ENCODE measurements at regions of chr19 and their contacts with region 1.

Region 1: DNA sequence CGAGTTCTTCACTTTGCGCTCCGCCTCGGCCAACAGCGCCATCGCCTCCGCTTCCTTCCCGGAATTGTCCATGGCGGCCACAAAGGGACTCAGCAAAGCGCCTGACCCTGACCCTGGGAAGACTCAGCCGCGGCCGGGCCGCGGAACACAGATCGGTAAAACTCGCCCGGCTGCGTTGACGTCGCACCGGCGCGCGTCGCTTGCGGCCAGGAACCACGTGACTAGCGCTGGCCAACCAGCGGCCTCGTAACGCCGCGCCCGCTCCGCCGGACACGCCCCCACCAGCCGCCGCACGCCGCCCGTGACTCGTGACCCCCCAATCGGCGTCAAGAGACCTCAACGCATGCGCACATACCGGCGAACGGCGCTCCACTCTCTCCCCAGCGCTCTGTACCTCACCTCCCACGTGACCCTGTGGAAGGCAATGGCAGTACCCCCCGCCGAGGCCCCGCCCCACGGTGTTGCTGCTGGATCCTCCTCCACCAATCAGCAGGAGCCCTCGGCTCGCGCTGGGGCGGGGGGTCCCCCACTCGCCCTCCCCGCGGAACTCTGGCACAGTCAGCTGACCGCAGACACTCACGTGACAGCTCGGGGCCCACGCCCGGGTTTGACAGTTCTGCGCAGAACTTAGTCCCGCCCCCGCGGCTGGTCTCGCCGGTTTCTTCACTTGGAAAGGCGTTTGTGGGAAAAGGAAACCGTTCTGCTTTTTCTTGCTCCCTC is at the start of gene NAPA:
- DNase-seq: peak; percentile 100
- total RNA-seq, gene NAPA: 112 TPM

Region 2: GRCh38 chr19:47436712-47437401 is 78.2 kb before region 1 on chr19:
- intact Hi-C with region 1: loop called (anchors 2 kb)
- DNase-seq: peak; percentile 84

Region 3: GRCh38 chr19:47483800-47484690 is 31.0 kb before region 1 on chr19 and contains the start of gene KPTN:
- intact Hi-C with region 1: loop called (anchors 2 kb)
- DNase-seq: peak; percentile 95
- total RNA-seq, gene KPTN: 5.2 TPM

Region 4: GRCh38 chr19:47600246-47601179 is 85.5 kb after region 1 on chr19:
- intact Hi-C with region 1: loop called (anchors 1 kb)
- DNase-seq: peak; percentile 100

Region 5: GRCh38 chr19:47697863-47698609 is 183.0 kb after region 1 on chr19:
- intact Hi-C with region 1: loop called (anchors 2 kb)
- DNase-seq: no peak